Naive thymus-derived CD4-positive, alpha-beta T cell (primary cell): ENCODE measurements at regions of chr19 and their contacts with region 1.

Region 1: DNA sequence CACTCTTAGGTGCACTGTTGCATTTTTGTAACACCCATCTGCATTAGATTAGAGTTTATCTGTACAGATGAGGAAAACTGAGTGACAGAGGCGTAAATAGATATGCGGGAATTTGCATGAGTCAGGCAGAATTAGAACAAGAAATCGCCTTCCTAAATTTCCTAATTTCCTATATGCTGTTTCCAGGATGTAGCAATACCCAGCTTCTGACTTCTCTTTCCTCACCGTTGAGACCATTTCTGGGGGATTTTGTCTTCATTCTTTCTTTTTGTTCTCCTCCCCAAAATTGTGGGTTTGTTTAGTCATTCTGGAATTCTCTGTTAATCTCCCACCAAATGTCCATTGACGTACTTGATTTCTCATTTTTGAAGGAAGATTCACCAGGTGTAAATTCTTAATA is 10.6 kb upstream of the ZNF792 start:
- DNase-seq: no peak
- ATAC-seq: no peak
- H3K4me3 ChIP-seq: no peak overlapping the region
- H3K4me3 Mint-ChIP-seq: peak overlapping the region in 4 of 10 donors; percentile 29 to 91 (median 38)
- H3K27ac ChIP-seq: no peak overlapping the region
- H3K27ac Mint-ChIP-seq: peak overlapping the region in 4 of 9 donors; percentile 23 to 86 (median 78)
- H3K4me1 ChIP-seq: peaks cover 8 to 9% of the 10 kb centered on the region in 2 donors
- H3K4me1 Mint-ChIP-seq: peaks cover 11 to 35% (median 26%) of the 10 kb centered on the region in 7 donors
- H3K27me3 ChIP-seq: no peaks in the 10 kb centered on the region
- H3K27me3 Mint-ChIP-seq: peaks cover 0 to 7% (median 0%) of the 10 kb centered on the region in 5 donors

Region 2: GRCh38 chr19:34733826-34734600 is 240.6 kb before region 1 on chr19 and contains the start of gene ZNF181:
- CTCF ChIA-PET with region 1: no interaction called
- POLR2A ChIA-PET with region 1: no interaction called
- intact Hi-C with region 1: loop called in 1 of 2 experiments (anchors 5 kb)
- DNase-seq: peak; percentile 58 to 84 (median 82)
- ATAC-seq: peak; percentile 89
- H3K4me3 ChIP-seq: peak within 1 kb of the TSS; percentile 79
- H3K4me3 Mint-ChIP-seq: peak within 1 kb of the TSS; percentile 86 to 99 (median 98)
- H3K27ac ChIP-seq: peak within 1 kb of the TSS; percentile 94
- H3K27ac Mint-ChIP-seq: peak within 1 kb of the TSS; percentile 90 to 99 (median 98)
- H3K4me1 ChIP-seq: peaks cover 11 to 17% of the 10 kb centered on the region in 2 donors
- H3K4me1 Mint-ChIP-seq: peaks cover 18 to 39% (median 28%) of the 10 kb centered on the region in 7 donors
- H3K27me3 ChIP-seq: no peaks in the 10 kb centered on the region
- H3K27me3 Mint-ChIP-seq: peaks cover 0 to 4% (median 0%) of the 10 kb centered on the region in 5 donors
- total RNA-seq, gene ZNF181: 4.8 to 28.5 (median 8.4) TPM

Region 3: GRCh38 chr19:34851353-34851752 is 123.3 kb before region 1 on chr19:
- CTCF ChIA-PET with region 1: no interaction called
- POLR2A ChIA-PET with region 1: no interaction called
- intact Hi-C with region 1: loop called in 1 of 2 experiments (anchors 5 kb)
- DNase-seq: peak in 1 of 9 donors; percentile 13
- ATAC-seq: no peak
- H3K4me3 ChIP-seq: no peak overlapping the region
- H3K4me3 Mint-ChIP-seq: no peak overlapping the region
- H3K27ac ChIP-seq: no peak overlapping the region
- H3K27ac Mint-ChIP-seq: peak overlapping the region in 4 of 9 donors; percentile 50 to 75 (median 62)
- H3K4me1 ChIP-seq: no peaks in the 10 kb centered on the region
- H3K4me1 Mint-ChIP-seq: peaks cover under 1 to 64% (median 43%) of the 10 kb centered on the region in 7 donors
- H3K27me3 ChIP-seq: no peaks in the 10 kb centered on the region
- H3K27me3 Mint-ChIP-seq: no peaks in the 10 kb centered on the region

Region 4: GRCh38 chr19:34999498-35000341 is 25.1 kb after region 1 on chr19 and contains the start of gene GRAMD1A:
- CTCF ChIA-PET with region 1: interaction called, 29 read pairs
- POLR2A ChIA-PET with region 1: interaction called, 58 read pairs
- intact Hi-C with region 1: loop called (anchors 1 kb)
- DNase-seq: peak; percentile 48 to 86 (median 63)
- ATAC-seq: peak; percentile 74
- H3K4me3 ChIP-seq: peak within 1 kb of the TSS; percentile 72
- H3K4me3 Mint-ChIP-seq: peak within 1 kb of the TSS; percentile 94 to 100 (median 98)
- H3K27ac ChIP-seq: peak within 1 kb of the TSS; percentile 97
- H3K27ac Mint-ChIP-seq: peak within 1 kb of the TSS; percentile 95 to 100 (median 98)
- H3K4me1 ChIP-seq: peaks cover 66 to 72% of the 10 kb centered on the region in 2 donors
- H3K4me1 Mint-ChIP-seq: peaks cover 58 to 81% (median 73%) of the 10 kb centered on the region in 7 donors
- H3K27me3 ChIP-seq: no peaks in the 10 kb centered on the region
- H3K27me3 Mint-ChIP-seq: no peaks in the 10 kb centered on the region
- total RNA-seq, gene GRAMD1A: 90.1 to 286 (median 253) TPM

Region 5: DNA sequence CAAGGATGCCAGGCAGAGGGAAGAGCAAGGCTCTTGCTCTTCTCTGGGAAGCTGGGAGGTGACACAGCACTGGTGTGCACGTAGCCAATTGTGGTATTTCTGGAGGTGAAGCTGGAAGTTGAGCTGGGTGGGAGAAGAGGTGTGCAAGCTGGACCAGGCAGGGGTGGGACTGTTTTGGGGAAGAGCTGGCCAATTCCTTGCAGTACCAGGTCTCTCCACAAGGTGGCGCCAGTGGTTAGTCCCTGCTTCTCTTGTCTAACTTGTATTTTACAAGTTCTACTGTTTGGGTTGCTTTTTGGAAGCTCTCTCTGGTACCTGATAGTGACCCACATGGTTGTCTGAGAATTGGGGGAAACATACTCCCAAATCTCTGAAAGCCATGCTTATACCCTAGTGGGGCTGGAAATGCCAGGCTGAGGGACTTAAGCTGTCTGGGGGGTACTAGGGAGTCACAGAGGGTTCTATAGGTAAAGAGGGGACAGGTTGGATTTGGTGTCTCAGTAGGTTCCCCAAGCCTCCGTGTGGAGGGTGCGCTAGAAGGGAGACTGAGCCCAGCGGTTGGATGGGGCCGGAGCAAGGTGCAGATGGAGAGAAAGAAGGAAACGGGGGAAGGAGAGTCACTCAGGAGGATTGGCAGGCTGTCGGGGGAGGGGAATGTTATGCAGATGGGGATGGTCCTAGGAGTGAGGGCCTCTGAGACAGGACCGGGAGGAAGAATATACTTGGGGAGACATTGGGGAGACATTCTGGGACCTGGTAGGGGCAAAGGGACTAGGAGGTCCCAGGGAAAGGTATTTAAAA is 69.9 kb after region 1 on chr19:
- CTCF ChIA-PET with region 1: interaction called, 7 read pairs
- POLR2A ChIA-PET with region 1: interaction called, 3 read pairs
- intact Hi-C with region 1: loop called (anchors 1 to 2 kb)
- DNase-seq: peak in 7 of 9 donors; percentile 36 to 68 (median 50)
- ATAC-seq: peak; percentile 46
- H3K4me3 ChIP-seq: no peak overlapping the region
- H3K4me3 Mint-ChIP-seq: peak overlapping the region in 5 of 10 donors; percentile 24 to 49 (median 29)
- H3K27ac ChIP-seq: no peak overlapping the region
- H3K27ac Mint-ChIP-seq: peak overlapping the region in 6 of 9 donors; percentile 40 to 88 (median 68)
- H3K4me1 ChIP-seq: peaks cover 15 to 16% of the 10 kb centered on the region in 2 donors
- H3K4me1 Mint-ChIP-seq: peaks cover 30 to 43% (median 38%) of the 10 kb centered on the region in 7 donors
- H3K27me3 ChIP-seq: no peaks in the 10 kb centered on the region
- H3K27me3 Mint-ChIP-seq: peaks cover 0 to 29% (median 10%) of the 10 kb centered on the region in 5 donors

Region 6: GRCh38 chr19:35090506-35091237 is 116.0 kb after region 1 on chr19:
- CTCF ChIA-PET with region 1: interaction called, 3 read pairs
- POLR2A ChIA-PET with region 1: no interaction called
- intact Hi-C with region 1: loop called (anchors 1 to 2 kb)
- DNase-seq: peak in 7 of 9 donors; percentile 13 to 43 (median 30)
- ATAC-seq: peak; percentile 80
- H3K4me3 ChIP-seq: no peak overlapping the region
- H3K4me3 Mint-ChIP-seq: peak overlapping the region in 4 of 10 donors; percentile 23 to 56 (median 30)
- H3K27ac ChIP-seq: no peak overlapping the region
- H3K27ac Mint-ChIP-seq: no peak overlapping the region
- H3K4me1 ChIP-seq: peaks cover 7 to 16% of the 10 kb centered on the region in 2 donors
- H3K4me1 Mint-ChIP-seq: peaks cover 0 to 10% (median 4%) of the 10 kb centered on the region in 7 donors
- H3K27me3 ChIP-seq: no peaks in the 10 kb centered on the region
- H3K27me3 Mint-ChIP-seq: peaks cover 0 to 10% (median 3%) of the 10 kb centered on the region in 5 donors